ENCODE measurements at regions of chr15 and their contacts with region 1.

Region 1: DNA sequence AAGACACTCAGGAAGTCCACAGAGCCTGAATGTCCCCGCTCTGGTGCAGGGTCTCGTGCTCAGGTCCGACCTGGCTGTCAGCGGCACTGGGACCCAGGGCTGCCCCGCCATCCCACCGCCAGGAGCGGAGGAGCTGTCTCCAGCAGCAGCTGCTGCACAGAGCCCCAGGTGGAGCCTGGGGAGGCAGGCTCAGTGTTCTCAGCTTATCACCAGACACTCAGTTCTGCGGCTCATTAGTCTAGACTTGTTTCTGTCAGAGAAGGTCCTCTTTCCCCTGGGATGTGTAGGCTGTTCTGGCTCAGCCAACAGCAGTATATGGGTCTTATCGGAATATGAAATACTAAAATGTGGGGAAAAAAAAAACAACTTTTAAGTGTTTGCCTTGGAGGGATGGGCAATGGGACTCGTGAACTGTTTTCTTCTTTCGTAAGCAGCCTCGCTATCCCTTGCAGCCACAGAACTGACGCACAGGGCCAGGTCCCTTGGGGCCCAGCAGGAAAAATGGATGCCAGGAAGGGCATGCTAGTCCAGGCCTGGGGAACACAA is 75.9 kb downstream of the KLF13 start:
- DNase-seq: peak; percentile 10
- ATAC-seq: no peak
- H3K4me3 ChIP-seq: no peak overlapping the region
- H3K27ac ChIP-seq: no peak overlapping the region
- H3K4me1 ChIP-seq: peaks cover 6% of the 10 kb centered on the region; the same call in 1 of the 2 replicates
- H3K27me3 ChIP-seq: no peaks in the 10 kb centered on the region
- CTCF ChIP-seq: no peak
- POLR2A ChIP-seq: no peak
- RAD21 ChIP-seq: no peak

Region 2: DNA sequence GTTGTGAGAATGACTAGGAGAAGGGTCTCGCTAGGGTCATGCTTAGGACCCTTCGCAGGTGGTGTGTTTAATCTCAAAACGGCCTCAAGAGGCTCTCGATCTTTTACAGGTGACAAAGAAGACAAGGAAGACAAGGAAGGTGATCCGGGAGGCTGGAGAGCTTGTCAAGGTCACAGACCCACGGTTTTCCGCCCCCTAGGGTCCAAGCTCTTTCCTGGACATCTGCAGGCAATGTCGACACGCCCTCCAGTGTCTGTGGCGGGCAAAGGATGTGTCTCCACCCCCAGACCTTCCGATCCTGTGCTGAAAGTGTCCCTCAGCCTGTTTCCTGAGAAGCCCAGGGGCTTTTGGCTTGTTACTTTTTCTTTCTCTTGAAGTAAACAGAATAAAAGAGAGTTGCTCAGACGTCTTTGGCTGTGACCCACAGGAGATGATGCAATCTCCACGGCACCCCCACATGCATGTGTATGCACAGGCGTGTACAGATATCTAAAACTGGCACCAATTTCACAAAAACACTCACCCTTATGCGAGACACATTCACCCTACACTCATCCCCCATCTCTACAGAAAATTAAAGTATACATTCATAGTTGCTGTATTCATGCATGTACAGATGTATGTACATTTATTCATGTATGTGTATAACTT is 32.8 kb after region 1 on chr15:
- CTCF ChIA-PET with region 1: no interaction called
- POLR2A ChIA-PET with region 1: no interaction called
- dilution Hi-C with region 1: no loop called
- in situ Hi-C with region 1: loop called (anchors 5 kb)
- intact Hi-C with region 1: no loop called
- DNase-seq: peak; percentile 72
- ATAC-seq: peak; percentile 85
- H3K4me3 ChIP-seq: no peak overlapping the region
- H3K27ac ChIP-seq: peak overlapping the region; percentile 72
- H3K4me1 ChIP-seq: peaks cover 15% of the 10 kb centered on the region
- H3K27me3 ChIP-seq: no peaks in the 10 kb centered on the region
- CTCF ChIP-seq: peak; percentile 77
- POLR2A ChIP-seq: no peak
- RAD21 ChIP-seq: peak; percentile 72

Region 3: DNA sequence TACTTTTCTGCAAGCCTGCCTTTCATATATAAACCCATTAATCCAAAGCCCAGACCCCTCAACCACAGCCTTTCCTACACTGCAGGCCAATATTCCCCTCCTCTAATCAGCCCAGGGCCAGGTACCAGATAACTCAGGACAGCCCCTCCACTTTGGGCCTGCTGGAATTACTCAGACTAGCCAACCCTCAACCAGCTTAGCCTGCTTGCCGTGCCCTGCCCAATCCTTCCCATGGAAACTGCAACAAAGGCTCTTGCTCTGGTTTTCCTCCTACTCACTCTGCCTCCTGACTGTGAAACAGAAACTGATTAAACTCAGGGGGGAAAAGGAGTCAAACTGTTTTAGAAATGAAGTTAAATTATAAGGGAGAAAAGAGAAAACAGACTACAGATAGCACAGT is 172.2 kb after region 1 on chr15:
- CTCF ChIA-PET with region 1: no interaction called
- POLR2A ChIA-PET with region 1: no interaction called
- dilution Hi-C with region 1: no loop called
- in situ Hi-C with region 1: no loop called
- intact Hi-C with region 1: no loop called
- DNase-seq: no peak
- ATAC-seq: peak; percentile 42
- H3K4me3 ChIP-seq: no peak overlapping the region
- H3K27ac ChIP-seq: no peak overlapping the region
- H3K4me1 ChIP-seq: 0 out of 2 replicates have a peak, but pooled peaks cover 1% of the 10 kb centered on the region
- H3K27me3 ChIP-seq: no peaks in the 10 kb centered on the region; the same call in 1 of the 2 replicates
- CTCF ChIP-seq: no peak
- POLR2A ChIP-seq: no peak
- RAD21 ChIP-seq: no peak

Measured in IMR-90 (cell line).